ENCODE measurements at regions of chr9 and their contacts with region 1.

Region 1: GRCh38 chr9:95131023-95131943 is 186.2 kb downstream of the FANCC start:
- DNase-seq: peak; percentile 57
- ATAC-seq: peak; percentile 65

Region 2: GRCh38 chr9:94681508-94681907 is 449.8 kb before region 1 on chr9:
- intact Hi-C with region 1: loop called (anchors 5 kb)
- DNase-seq: peak; percentile 85
- ATAC-seq: peak; percentile 98

Region 3: DNA sequence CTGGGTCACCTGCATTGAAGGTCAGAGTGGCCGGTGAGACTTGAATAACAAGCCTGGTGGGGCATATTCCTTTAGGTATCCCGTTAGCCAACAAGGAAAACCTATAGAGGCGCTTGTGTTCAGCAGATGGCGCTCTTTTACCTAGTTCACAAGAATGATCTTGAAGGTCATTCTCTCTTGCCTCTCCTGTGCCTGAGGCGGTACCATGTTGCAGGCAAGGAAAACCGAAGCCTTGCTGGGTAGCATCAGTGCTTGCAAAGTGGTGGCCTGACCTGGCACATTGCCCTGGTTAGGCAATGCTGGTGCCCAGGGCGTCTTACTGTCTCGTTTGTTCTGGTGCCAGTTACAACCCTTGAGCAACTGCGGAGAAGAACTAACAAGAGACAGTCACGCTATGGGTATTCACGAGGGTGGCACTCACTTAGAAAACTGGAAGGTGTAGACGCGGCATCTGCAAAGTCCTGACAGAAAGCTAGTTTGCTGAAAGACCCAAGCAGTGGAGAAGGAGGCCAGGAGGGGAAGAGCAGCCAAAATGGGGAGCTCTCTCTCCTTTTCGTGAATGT is 348.1 kb before region 1 on chr9:
- intact Hi-C with region 1: loop called (anchors 5 kb)
- DNase-seq: peak; percentile 59
- ATAC-seq: peak; percentile 77